IMR-90 (cell line): ENCODE measurements at regions of chr9 and their contacts with region 1.

Region 1: GRCh38 chr9:121439711-121440664 is 59.7 kb downstream of the GGTA1 start:
- DNase-seq: peak; percentile 54
- ATAC-seq: peak; percentile 92
- H3K4me3 ChIP-seq: no peak overlapping the region
- H3K27ac ChIP-seq: no peak overlapping the region
- H3K4me1 ChIP-seq: no peaks in the 10 kb centered on the region
- H3K27me3 ChIP-seq: peaks cover 43% of the 10 kb centered on the region
- CTCF ChIP-seq: peak; percentile 51
- POLR2A ChIP-seq: no peak
- RAD21 ChIP-seq: peak; percentile 49

Region 2: DNA sequence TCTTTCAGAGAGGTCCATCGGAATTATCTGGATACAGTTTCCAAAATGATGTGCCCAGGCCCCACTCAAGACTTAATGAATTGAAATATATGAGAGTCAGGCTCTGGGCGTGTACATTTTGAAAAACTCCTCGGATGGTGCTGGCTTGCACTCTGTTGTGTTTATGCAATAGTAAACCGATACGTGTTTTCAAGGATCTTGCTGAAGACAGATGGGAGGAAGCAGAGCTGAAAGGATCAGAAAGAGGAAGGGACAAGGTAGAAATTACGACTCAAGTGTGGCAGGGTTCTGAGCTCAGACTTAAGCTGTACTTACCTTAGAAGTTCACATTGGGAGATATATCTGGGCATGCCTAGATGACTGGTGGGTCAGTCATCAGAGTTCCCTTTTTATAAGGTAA is 56.3 kb before region 1 on chr9:
- CTCF ChIA-PET with region 1: no interaction called
- POLR2A ChIA-PET with region 1: no interaction called
- dilution Hi-C with region 1: no loop called
- in situ Hi-C with region 1: loop called (anchors 10 kb)
- intact Hi-C with region 1: no loop called
- DNase-seq: no peak
- ATAC-seq: peak; percentile 42; the same call in 1 of the 2 replicates
- H3K4me3 ChIP-seq: no peak overlapping the region
- H3K27ac ChIP-seq: no peak overlapping the region
- H3K4me1 ChIP-seq: peaks cover 4% of the 10 kb centered on the region; the same call in 1 of the 2 replicates
- H3K27me3 ChIP-seq: no peaks in the 10 kb centered on the region
- CTCF ChIP-seq: no peak
- POLR2A ChIP-seq: no peak
- RAD21 ChIP-seq: no peak

Region 3: GRCh38 chr9:121650217-121651007 is 210.4 kb after region 1 on chr9:
- CTCF ChIA-PET with region 1: no interaction called
- POLR2A ChIA-PET with region 1: no interaction called
- dilution Hi-C with region 1: no loop called
- in situ Hi-C with region 1: no loop called
- intact Hi-C with region 1: loop called (anchors 5 kb)
- DNase-seq: peak; percentile 56
- ATAC-seq: peak; percentile 34
- H3K4me3 ChIP-seq: no peak overlapping the region
- H3K27ac ChIP-seq: no peak overlapping the region
- H3K4me1 ChIP-seq: peaks cover 9% of the 10 kb centered on the region; the same call in 1 of the 2 replicates
- H3K27me3 ChIP-seq: peaks cover 13% of the 10 kb centered on the region
- CTCF ChIP-seq: no peak
- POLR2A ChIP-seq: no peak
- RAD21 ChIP-seq: no peak